Mammary epithelial cell (primary cell): ENCODE measurements at regions of chr9 and their contacts with region 1.

Region 1: DNA sequence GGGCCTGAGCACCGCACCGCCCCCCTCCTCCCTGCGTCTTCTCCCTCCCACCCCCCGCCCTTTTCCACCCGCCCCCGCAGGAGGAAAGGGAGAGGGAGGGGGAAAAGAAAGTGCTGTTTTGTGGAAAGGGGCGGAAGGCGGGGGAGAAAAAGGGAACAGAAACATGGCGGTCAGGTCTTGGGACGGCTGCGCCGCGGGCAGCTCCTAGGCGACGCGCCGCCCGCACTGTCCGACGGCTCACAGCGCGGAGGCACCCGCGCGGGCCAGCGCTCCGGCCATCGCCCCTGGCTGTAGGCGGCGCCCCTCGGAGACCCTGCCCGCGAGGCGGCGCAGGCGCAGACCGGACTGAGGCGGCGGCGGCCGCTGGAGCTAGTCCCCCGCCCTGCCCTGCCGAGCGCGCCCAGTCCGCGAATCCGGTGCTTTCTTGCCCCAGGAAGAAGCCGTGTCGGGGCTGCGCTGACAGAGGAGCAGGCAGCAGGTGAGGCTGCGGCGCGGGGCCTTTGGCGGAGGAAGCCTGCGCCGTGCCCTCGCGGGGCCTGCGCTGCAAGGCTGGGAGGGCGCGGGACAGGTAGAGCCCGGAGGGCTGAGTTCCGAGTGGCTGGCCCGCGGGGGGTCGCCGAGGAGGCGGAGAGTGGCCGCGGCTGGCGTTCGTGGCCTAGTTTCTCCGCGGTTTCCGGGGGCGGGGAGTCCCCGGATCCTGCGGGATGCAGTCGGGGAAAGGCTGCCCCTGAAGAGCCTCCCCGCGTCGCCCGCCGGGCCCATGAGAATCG is at the start of gene DENND4C:
- DNase-seq: peak; percentile 85
- H3K4me3 ChIP-seq: peak within 1 kb of the TSS; percentile 74 to 100 (median 94)
- H3K27ac ChIP-seq: peak within 1 kb of the TSS; percentile 91
- H3K4me1 ChIP-seq: peaks cover 9% of the 10 kb centered on the region
- H3K27me3 ChIP-seq: no peaks in the 10 kb centered on the region
- CTCF ChIP-seq: no peak
- total RNA-seq, gene DENND4C: 28.5 to 65.0 TPM

Region 2: DNA sequence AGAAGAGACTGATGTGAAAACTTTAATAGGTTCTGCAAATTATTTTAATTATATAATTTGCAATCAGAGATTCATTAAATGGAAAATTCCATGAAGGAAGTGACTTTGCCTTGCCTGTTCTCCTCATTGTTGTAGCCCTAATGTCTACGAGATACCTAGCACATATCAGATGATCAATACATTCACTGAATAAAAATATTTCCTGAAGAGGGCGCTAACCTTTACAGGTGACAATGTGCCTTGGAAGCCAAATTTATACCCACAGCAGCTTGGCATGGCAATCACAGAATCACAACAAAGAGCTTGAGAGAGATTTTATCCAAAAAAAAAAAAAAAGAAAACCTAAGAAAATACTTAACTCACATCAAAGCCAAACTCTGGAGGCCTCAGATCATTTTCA is 145.2 kb before region 1 on chr9:
- CTCF ChIA-PET with region 1: no interaction called
- dilution Hi-C with region 1: no loop called
- in situ Hi-C with region 1: no loop called
- intact Hi-C with region 1: loop called (anchors 5 kb)
- DNase-seq: no peak
- H3K4me3 ChIP-seq: no peak overlapping the region
- H3K27ac ChIP-seq: no peak overlapping the region
- H3K4me1 ChIP-seq: peaks cover 9% of the 10 kb centered on the region
- H3K27me3 ChIP-seq: no peaks in the 10 kb centered on the region
- CTCF ChIP-seq: peak; percentile 47

Region 3: DNA sequence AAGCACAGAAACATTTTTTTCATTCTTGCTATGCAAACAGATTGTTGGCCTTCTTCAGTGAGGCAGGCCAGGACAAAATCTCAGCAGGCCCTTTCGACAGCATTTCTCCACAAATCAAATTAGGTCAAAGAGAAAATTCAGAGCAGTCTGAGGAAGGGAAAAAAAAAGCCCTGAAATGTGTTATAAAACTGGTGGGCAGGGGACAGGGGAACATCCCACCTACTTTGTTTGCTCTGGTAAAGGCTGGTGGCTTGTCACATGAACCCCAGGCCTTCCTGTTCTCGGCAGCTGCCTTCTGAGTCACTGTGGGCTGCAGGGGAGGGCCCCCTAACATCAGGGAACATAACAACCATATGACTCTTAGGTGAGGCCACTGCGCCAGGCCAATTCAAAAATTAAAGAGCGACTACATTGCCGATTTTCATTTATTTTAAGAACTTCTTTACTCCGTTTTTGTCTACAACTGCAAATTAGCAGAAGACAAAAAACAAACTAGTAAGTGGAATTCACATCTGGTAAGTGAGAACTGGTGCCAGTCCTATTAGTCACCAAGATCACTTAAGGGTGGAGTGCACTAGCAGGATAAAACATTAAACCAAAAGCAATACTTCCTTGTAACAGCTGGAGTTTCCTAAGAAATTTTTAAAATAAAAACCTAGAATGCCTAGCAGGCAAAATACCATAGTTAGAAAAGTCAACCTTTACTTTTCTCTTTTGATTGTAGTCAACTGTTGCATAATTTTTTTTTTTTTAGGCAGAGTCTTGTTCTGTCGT is 46.2 kb before region 1 on chr9:
- CTCF ChIA-PET with region 1: no interaction called
- dilution Hi-C with region 1: loop called (anchors 5 kb)
- in situ Hi-C with region 1: no loop called
- intact Hi-C with region 1: loop called (anchors 2 kb)
- DNase-seq: peak; percentile 75
- H3K4me3 ChIP-seq: peak overlapping the region in 1 of 3 experiments; percentile 11
- H3K27ac ChIP-seq: peak overlapping the region; percentile 94
- H3K4me1 ChIP-seq: peaks cover 12% of the 10 kb centered on the region
- H3K27me3 ChIP-seq: no peaks in the 10 kb centered on the region
- CTCF ChIP-seq: no peak

Region 4: GRCh38 chr9:19342947-19343346 is 112.4 kb after region 1 on chr9:
- CTCF ChIA-PET with region 1: no interaction called
- dilution Hi-C with region 1: no loop called
- in situ Hi-C with region 1: loop called in 1 of 2 experiments (anchors 25 kb)
- intact Hi-C with region 1: no loop called
- DNase-seq: no peak
- H3K4me3 ChIP-seq: no peak overlapping the region
- H3K27ac ChIP-seq: no peak overlapping the region
- H3K4me1 ChIP-seq: no peaks in the 10 kb centered on the region
- H3K27me3 ChIP-seq: no peaks in the 10 kb centered on the region
- CTCF ChIP-seq: no peak